T-cell (primary cell): ENCODE measurements at regions of chr5 and their contacts with region 1.

Region 1: GRCh38 chr5:6765612-6766525 is 52.6 kb downstream of the TENT4A start:
- DNase-seq: peak; percentile 12 to 68 (median 41)
- ATAC-seq: peak; percentile 38 to 70 (median 60)
- H3K4me3 ChIP-seq: no peak overlapping the region
- H3K4me3 Mint-ChIP-seq: no peak overlapping the region
- H3K27ac ChIP-seq: no peak overlapping the region
- H3K27ac Mint-ChIP-seq: no peak overlapping the region
- H3K4me1 ChIP-seq: peaks cover 0 to 14% of the 10 kb centered on the region in 2 experiments
- H3K4me1 Mint-ChIP-seq: peaks cover 2 to 8% (median 7%) of the 10 kb centered on the region in 3 donors
- H3K27me3 ChIP-seq: peaks cover 0 to 3% of the 10 kb centered on the region in 2 experiments
- H3K27me3 Mint-ChIP-seq: peaks cover 0 to 4% of the 10 kb centered on the region in 2 donors

Region 2: GRCh38 chr5:5598547-5599113 is 1167.2 kb before region 1 on chr5:
- CTCF ChIA-PET with region 1: no interaction called
- POLR2A ChIA-PET with region 1: interaction called in 1 of 2 experiments, 20 read pairs
- DNase-seq: no peak
- ATAC-seq: no peak
- H3K4me3 ChIP-seq: no peak overlapping the region
- H3K4me3 Mint-ChIP-seq: no peak overlapping the region
- H3K27ac ChIP-seq: no peak overlapping the region
- H3K27ac Mint-ChIP-seq: no peak overlapping the region
- H3K4me1 ChIP-seq: no peaks in the 10 kb centered on the region
- H3K4me1 Mint-ChIP-seq: no peaks in the 10 kb centered on the region
- H3K27me3 ChIP-seq: no peaks in the 10 kb centered on the region
- H3K27me3 Mint-ChIP-seq: peaks cover 0 to 4% of the 10 kb centered on the region in 2 donors

Region 3: GRCh38 chr5:6783787-6784186 is 17.9 kb after region 1 on chr5:
- CTCF ChIA-PET with region 1: no interaction called
- POLR2A ChIA-PET with region 1: no interaction called
- DNase-seq: no peak
- ATAC-seq: no peak
- H3K4me3 ChIP-seq: no peak overlapping the region
- H3K4me3 Mint-ChIP-seq: no peak overlapping the region
- H3K27ac ChIP-seq: no peak overlapping the region
- H3K27ac Mint-ChIP-seq: no peak overlapping the region
- H3K4me1 ChIP-seq: no peaks in the 10 kb centered on the region
- H3K4me1 Mint-ChIP-seq: peaks cover 0 to 6% (median 3%) of the 10 kb centered on the region in 3 donors
- H3K27me3 ChIP-seq: peaks cover 0 to 9% of the 10 kb centered on the region in 2 experiments
- H3K27me3 Mint-ChIP-seq: peaks cover 5 to 6% of the 10 kb centered on the region in 2 donors